Activated CD4-positive, alpha-beta memory T cell treated with anti-CD3 and anti-CD28 coated beads for 36 hours (primary cell): ENCODE measurements at regions of chr13 and their contacts with region 1.

Region 1: DNA sequence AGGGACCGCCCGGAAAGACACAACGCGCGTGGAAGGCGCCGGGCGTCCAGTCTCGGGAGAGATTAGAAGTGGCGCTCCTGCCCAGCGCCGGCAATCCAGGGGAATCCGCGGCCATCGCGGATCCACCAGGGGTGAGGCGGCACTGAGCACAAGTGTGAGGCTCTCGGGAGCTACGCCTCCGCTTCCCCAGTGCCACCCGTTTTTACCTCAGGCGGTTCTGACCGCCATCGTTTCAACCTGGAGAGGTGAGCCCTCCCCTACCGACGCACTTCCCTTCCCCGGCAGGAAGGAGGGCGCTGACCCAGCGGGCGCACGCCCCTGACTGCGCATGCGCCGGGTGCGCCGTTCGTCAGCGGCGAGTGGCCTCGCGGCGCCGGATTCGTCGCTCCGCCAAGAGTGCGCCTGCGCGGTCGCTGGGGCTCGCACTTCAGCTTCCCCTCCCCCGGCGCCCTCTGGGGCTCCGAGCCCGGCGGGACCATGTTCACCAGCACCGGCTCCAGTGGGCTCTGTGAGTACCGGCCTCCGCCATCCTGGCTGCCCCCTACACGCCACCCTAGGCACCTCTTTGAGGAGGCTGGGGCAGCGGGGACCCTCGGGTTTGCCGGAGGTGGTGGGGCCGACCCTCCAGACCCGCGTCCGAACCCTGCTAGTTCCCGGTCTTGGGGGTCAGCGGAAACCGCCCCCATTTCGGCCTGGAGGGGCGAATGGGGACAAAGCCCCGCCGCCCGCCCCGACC is at the start of gene UBAC2:
- DNase-seq: peak; percentile 97
- H3K4me3 Mint-ChIP-seq: peak within 1 kb of the TSS; percentile 90
- H3K27ac Mint-ChIP-seq: peak within 1 kb of the TSS; percentile 90
- H3K4me1 Mint-ChIP-seq: peaks cover 59% of the 10 kb centered on the region
- H3K27me3 Mint-ChIP-seq: no peaks in the 10 kb centered on the region
- total RNA-seq, gene UBAC2: 51.8 to 54.5 TPM

Region 2: DNA sequence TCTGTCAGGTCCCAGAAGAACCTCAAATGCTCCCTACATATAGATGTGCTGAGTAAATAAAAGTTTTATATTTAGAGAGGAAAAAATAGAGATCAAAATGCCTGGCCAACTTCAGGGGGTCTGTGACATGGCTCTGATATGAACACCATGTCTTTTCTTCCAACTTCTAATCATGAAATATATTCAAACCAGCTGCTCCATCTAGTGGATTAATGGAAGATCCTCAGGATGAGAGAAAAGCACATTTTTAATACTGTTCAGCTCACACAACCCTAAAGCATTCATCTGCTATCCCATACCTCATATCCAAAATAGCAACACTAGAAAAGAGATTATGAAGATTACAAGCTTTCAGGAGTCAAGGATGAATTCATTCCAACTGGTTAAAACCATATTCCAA is 166.8 kb before region 1 on chr13:
- CTCF ChIA-PET with region 1: interaction called, 4 read pairs
- POLR2A ChIA-PET with region 1: no interaction called
- intact Hi-C with region 1: loop called (anchors 5 kb)
- DNase-seq: no peak
- H3K4me3 Mint-ChIP-seq: no peak overlapping the region
- H3K27ac Mint-ChIP-seq: no peak overlapping the region
- H3K4me1 Mint-ChIP-seq: peaks cover 57% of the 10 kb centered on the region
- H3K27me3 Mint-ChIP-seq: no peaks in the 10 kb centered on the region

Region 3: DNA sequence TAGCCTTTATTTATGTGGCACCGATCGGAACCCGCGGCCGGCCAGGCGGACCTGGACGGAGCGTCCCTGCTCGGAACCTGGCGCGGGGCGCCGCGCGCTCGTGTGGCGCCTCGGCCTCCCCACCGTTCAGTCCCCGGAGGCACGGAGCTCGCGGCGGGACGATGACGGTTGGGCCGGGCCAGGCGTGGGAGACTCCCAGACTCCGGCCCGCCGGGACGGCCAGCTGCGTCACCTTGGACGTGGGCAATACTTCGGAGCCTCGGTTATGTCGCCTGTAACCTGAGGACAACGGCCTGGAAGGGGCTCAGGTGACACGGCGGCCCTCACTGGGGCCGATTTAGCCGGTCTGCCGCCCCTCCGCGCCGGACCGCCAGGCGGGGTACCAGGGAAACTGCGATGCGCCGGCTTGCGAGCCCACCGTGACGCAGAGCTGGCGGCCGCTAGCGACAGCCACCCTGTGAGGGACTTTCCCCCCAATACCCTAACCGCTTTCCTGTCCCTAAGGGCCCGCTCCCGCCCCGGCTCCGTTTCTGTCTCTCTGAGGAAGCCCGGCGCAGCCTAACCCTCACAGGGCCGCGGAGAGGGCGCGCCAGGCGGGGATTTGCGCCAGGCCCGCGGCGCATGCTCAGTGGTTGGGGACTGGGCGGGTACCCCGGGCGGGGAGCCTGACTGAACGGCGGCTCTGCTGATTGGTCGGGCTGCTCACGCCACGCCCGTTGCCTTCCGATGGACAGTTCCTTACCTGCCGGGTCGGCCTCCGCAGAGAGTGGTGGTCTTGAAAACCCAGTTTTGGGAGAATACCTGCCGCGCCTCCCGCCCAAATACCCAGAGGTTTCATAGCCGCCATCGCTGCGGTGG is 113.3 kb before region 1 on chr13:
- CTCF ChIA-PET with region 1: interaction called, 4 read pairs
- POLR2A ChIA-PET with region 1: interaction called, 6 read pairs
- intact Hi-C with region 1: loop called (anchors 1 kb)
- DNase-seq: peak; percentile 95
- H3K4me3 Mint-ChIP-seq: peak overlapping the region; percentile 99
- H3K27ac Mint-ChIP-seq: peak overlapping the region; percentile 97
- H3K4me1 Mint-ChIP-seq: peaks cover 32% of the 10 kb centered on the region
- H3K27me3 Mint-ChIP-seq: no peaks in the 10 kb centered on the region

Region 4: DNA sequence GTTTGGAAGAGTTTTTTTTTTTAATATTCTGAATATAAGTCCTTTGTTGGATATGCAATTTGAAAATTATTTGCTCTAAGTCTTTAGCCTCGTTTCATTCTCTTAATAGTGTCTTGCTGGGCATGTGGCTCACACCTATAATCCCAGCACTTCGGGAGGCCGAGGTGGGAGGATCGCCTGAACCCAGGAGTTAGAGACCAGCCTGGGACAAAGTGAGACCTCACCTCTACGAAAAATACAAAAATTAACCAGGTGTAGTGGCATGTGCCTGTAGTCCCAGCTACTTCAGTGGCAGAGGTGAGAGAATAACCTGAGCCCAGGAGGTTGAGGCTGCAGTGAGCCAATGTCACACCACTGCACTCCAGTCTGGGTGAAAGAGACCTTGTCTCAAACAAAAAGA is 87.2 kb before region 1 on chr13:
- CTCF ChIA-PET with region 1: no interaction called
- POLR2A ChIA-PET with region 1: no interaction called
- intact Hi-C with region 1: no loop called
- DNase-seq: no peak
- H3K4me3 Mint-ChIP-seq: no peak overlapping the region
- H3K27ac Mint-ChIP-seq: no peak overlapping the region
- H3K4me1 Mint-ChIP-seq: no peaks in the 10 kb centered on the region
- H3K27me3 Mint-ChIP-seq: peaks cover 2% of the 10 kb centered on the region

Region 5: DNA sequence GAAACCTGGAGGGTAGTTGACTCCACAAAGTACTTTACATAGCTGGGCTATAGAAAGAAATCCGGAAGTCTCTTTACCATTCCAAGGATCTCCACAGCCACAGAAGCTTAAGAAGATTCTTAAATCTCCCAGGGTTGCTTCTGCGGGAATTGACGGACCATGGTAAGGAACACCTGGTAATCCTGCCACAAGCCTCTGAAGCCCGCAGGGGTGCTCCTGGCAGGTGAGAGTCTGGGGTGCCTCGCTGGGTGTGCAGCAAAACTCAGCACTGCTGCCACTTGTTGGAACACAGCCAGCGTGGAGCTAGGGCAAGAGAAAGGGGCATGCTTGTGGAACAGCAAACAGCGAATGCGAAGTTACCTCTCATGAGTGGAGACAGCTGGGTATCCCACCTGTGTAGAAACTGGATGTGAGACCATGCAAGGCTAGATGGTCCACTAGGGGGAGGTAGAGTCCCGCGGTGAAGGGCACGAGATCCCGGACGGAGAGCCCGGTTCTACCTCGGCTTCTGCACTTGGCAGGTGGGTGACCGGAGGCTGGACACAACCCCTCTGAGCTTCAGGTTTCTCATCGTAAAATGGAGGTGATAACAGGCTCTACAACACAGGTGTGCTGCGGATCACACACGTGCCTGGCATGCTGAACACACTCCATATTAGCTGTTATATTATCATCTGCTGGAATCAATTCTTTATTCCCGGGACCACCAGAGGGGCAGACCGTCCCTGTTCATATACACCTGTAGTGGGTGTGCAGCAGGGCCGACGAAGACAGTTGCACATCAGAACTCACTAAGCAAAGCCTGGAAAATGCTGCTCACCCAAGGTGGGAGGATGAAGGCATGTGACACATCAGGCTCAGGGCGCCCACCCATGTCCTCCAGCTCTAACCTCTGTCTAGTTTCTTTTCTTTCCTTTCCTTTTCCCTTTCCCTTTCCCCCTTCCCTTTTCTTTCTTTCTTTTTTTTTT is 24.0 kb before region 1 on chr13:
- CTCF ChIA-PET with region 1: interaction called, 23 read pairs
- POLR2A ChIA-PET with region 1: no interaction called
- intact Hi-C with region 1: loop called (anchors 1 kb)
- DNase-seq: peak; percentile 84
- H3K4me3 Mint-ChIP-seq: peak overlapping the region; percentile 45
- H3K27ac Mint-ChIP-seq: no peak overlapping the region
- H3K4me1 Mint-ChIP-seq: peaks cover 25% of the 10 kb centered on the region
- H3K27me3 Mint-ChIP-seq: peaks cover 3% of the 10 kb centered on the region

Region 6: GRCh38 chr13:99237981-99238662 is 37.5 kb after region 1 on chr13:
- CTCF ChIA-PET with region 1: interaction called, 3 read pairs
- POLR2A ChIA-PET with region 1: interaction called, 3 read pairs
- intact Hi-C with region 1: loop called (anchors 1 kb)
- DNase-seq: peak; percentile 61
- H3K4me3 Mint-ChIP-seq: peak overlapping the region; percentile 62
- H3K27ac Mint-ChIP-seq: peak overlapping the region; percentile 81
- H3K4me1 Mint-ChIP-seq: peaks cover 50% of the 10 kb centered on the region
- H3K27me3 Mint-ChIP-seq: no peaks in the 10 kb centered on the region

Region 7: DNA sequence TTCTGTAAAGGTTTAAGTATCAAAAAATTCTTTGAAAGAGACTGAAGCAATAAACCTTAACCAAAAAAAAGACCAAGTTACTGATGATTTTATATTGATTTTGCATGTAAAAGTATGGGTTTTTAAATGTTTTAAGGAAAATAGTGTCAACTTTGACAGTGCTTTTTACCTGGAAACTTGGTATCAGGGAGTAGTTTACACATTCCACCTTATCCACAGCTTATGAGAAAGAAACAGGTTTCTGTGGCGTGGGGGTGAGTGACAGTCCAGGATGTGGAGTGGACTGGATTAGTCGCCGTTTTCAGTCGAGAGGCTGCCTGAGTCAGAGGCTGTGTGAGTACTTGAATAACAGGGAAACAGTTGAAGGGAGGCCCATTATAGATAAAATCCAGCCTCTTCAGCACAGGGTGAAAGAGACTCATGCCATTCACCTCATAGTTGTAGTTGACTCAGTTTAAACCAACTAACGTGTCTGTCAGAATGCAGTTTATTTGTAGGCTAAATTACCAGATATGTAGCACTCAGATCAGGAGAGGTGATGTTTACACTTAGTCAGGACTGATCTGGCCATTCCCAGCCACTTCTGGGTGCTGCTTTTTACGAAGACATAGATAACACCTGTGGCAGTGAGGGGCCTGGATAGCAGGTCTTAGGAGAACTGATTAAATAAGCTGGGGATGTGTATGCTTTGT is 107.2 kb after region 1 on chr13:
- CTCF ChIA-PET with region 1: no interaction called
- POLR2A ChIA-PET with region 1: interaction called, 7 read pairs
- intact Hi-C with region 1: loop called (anchors 5 kb)
- DNase-seq: peak; percentile 91
- H3K4me3 Mint-ChIP-seq: peak overlapping the region; percentile 93
- H3K27ac Mint-ChIP-seq: peak overlapping the region; percentile 99
- H3K4me1 Mint-ChIP-seq: peaks cover 72% of the 10 kb centered on the region
- H3K27me3 Mint-ChIP-seq: no peaks in the 10 kb centered on the region

Region 8: DNA sequence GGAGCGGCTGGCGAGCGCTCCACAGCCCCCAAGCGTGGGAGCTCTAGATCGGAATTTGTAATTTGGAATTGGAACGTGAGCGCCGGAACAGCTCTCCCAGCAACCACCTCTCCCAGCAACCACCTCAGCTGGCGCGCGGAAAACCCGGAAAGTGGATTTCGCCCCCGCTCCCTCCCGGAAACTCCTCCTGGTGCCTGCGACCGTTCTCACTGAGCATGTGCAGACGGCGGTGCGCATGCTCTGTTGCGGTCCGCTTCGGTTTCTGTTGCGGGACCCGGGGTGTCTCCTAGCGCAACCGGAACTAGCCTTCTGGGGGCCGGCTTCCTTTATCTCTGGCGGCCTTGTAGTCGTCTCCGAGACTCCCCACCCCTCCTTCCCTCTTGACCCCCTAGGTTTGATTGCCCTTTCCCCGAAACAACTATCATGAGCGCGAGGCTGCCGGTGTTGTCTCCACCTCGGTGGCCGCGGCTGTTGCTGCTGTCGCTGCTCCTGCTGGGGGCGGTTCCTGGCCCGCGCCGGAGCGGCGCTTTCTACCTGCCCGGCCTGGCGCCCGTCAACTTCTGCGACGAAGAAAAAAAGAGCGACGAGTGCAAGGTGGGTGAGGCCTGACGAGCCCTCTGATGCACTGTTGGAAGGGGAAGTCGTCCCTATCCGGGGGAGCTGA is 300.7 kb after region 1 on chr13 and contains the start of gene TM9SF2:
- CTCF ChIA-PET with region 1: interaction called, 4 read pairs
- POLR2A ChIA-PET with region 1: interaction called, 4 read pairs
- intact Hi-C with region 1: loop called (anchors 1 kb)
- DNase-seq: peak; percentile 98
- H3K4me3 Mint-ChIP-seq: peak within 1 kb of the TSS; percentile 88
- H3K27ac Mint-ChIP-seq: peak within 1 kb of the TSS; percentile 88
- H3K4me1 Mint-ChIP-seq: peaks cover 67% of the 10 kb centered on the region
- H3K27me3 Mint-ChIP-seq: no peaks in the 10 kb centered on the region
- total RNA-seq, gene TM9SF2: 67.2 to 72.0 TPM

Region 9: GRCh38 chr13:99617474-99618255 is 417.1 kb after region 1 on chr13:
- CTCF ChIA-PET with region 1: no interaction called
- POLR2A ChIA-PET with region 1: no interaction called
- intact Hi-C with region 1: no loop called
- DNase-seq: peak; percentile 54
- H3K4me3 Mint-ChIP-seq: no peak overlapping the region
- H3K27ac Mint-ChIP-seq: no peak overlapping the region
- H3K4me1 Mint-ChIP-seq: peaks cover 10% of the 10 kb centered on the region
- H3K27me3 Mint-ChIP-seq: no peaks in the 10 kb centered on the region